B cell (primary cell): ENCODE measurements at regions of chr6 and their contacts with region 1.

Region 1: DNA sequence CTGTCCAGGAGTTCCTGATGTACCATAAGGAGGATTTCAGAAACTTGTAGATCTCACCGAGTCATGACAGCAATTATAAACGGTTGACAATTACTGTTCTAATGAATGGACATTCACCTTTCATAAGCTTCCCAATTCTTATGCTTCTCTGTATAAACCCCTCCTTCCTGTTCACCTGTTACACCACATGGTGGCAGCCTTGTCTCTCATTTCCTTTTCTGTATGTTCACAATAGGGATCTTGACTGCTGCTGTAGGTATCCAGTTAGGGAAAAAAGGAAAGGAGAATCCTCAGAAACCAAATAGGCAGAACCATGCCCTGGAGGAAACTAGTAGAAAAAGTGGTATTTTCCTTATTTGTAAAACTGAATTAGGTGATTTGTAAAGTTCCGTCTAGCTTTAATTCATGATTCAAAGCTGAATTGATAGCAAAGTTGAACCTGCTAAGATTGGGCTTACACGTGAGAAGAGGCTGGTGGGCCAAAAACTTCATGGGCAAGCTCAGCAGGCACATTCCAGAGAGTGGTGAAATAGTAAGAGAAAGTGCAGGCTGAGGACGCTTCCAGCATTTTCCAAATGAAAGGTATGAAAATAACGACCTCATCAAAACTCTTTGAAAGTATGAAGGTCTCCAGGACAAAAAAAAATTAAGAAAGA is 29.0 kb upstream of the TBPL1 start:
- DNase-seq: peak; percentile 77
- ATAC-seq: peak; percentile 88
- H3K4me3 ChIP-seq: no peak overlapping the region
- H3K4me3 Mint-ChIP-seq: no peak overlapping the region
- H3K27ac ChIP-seq: no peak overlapping the region
- H3K27ac Mint-ChIP-seq: no peak overlapping the region
- H3K4me1 ChIP-seq: no peaks in the 10 kb centered on the region
- H3K4me1 Mint-ChIP-seq: no peaks in the 10 kb centered on the region
- H3K27me3 ChIP-seq: peaks cover 0 to 18% (median 4%) of the 10 kb centered on the region in 4 experiments
- H3K27me3 Mint-ChIP-seq: peaks cover 33% of the 10 kb centered on the region
- CTCF ChIP-seq: peak; percentile 90

Region 2: GRCh38 chr6:133937909-133938308 is 13.8 kb after region 1 on chr6:
- CTCF ChIA-PET with region 1: interaction called, 32 read pairs
- POLR2A ChIA-PET with region 1: no interaction called
- intact Hi-C with region 1: no loop called
- DNase-seq: no peak
- ATAC-seq: no peak
- H3K4me3 ChIP-seq: no peak overlapping the region
- H3K4me3 Mint-ChIP-seq: no peak overlapping the region
- H3K27ac ChIP-seq: no peak overlapping the region
- H3K27ac Mint-ChIP-seq: no peak overlapping the region
- H3K4me1 ChIP-seq: no peaks in the 10 kb centered on the region
- H3K4me1 Mint-ChIP-seq: no peaks in the 10 kb centered on the region
- H3K27me3 ChIP-seq: peaks cover 0 to 11% (median 2%) of the 10 kb centered on the region in 4 experiments
- H3K27me3 Mint-ChIP-seq: peaks cover 30% of the 10 kb centered on the region
- CTCF ChIP-seq: no peak

Region 3: GRCh38 chr6:133952815-133953633 is 29.0 kb after region 1 on chr6 and contains the start of gene TBPL1:
- CTCF ChIA-PET with region 1: interaction called, 13 read pairs
- POLR2A ChIA-PET with region 1: no interaction called
- intact Hi-C with region 1: no loop called
- DNase-seq: peak; percentile 97
- ATAC-seq: peak; percentile 78
- H3K4me3 ChIP-seq: peak within 1 kb of the TSS; percentile 78 to 98 (median 94)
- H3K4me3 Mint-ChIP-seq: peak within 1 kb of the TSS; percentile 98
- H3K27ac ChIP-seq: peak within 1 kb of the TSS; percentile 83 to 89
- H3K27ac Mint-ChIP-seq: peak within 1 kb of the TSS; percentile 97
- H3K4me1 ChIP-seq: peaks cover 20 to 27% of the 10 kb centered on the region in 2 donors
- H3K4me1 Mint-ChIP-seq: peaks cover 48% of the 10 kb centered on the region
- H3K27me3 ChIP-seq: no peaks in the 10 kb centered on the region
- H3K27me3 Mint-ChIP-seq: no peaks in the 10 kb centered on the region
- CTCF ChIP-seq: no peak
- total RNA-seq, gene TBPL1: 26.9 and 29.6 TPM in 2 replicates

Region 4: GRCh38 chr6:133973109-133973971 is 49.3 kb after region 1 on chr6:
- CTCF ChIA-PET with region 1: interaction called, 31 read pairs
- POLR2A ChIA-PET with region 1: no interaction called
- intact Hi-C with region 1: loop called (anchors 1 kb)
- DNase-seq: peak; percentile 63
- ATAC-seq: peak; percentile 43
- H3K4me3 ChIP-seq: no peak overlapping the region
- H3K4me3 Mint-ChIP-seq: no peak overlapping the region
- H3K27ac ChIP-seq: no peak overlapping the region
- H3K27ac Mint-ChIP-seq: no peak overlapping the region
- H3K4me1 ChIP-seq: no peaks in the 10 kb centered on the region
- H3K4me1 Mint-ChIP-seq: peaks cover 27% of the 10 kb centered on the region
- H3K27me3 ChIP-seq: no peaks in the 10 kb centered on the region
- H3K27me3 Mint-ChIP-seq: no peaks in the 10 kb centered on the region
- CTCF ChIP-seq: peak; percentile 86

Region 5: DNA sequence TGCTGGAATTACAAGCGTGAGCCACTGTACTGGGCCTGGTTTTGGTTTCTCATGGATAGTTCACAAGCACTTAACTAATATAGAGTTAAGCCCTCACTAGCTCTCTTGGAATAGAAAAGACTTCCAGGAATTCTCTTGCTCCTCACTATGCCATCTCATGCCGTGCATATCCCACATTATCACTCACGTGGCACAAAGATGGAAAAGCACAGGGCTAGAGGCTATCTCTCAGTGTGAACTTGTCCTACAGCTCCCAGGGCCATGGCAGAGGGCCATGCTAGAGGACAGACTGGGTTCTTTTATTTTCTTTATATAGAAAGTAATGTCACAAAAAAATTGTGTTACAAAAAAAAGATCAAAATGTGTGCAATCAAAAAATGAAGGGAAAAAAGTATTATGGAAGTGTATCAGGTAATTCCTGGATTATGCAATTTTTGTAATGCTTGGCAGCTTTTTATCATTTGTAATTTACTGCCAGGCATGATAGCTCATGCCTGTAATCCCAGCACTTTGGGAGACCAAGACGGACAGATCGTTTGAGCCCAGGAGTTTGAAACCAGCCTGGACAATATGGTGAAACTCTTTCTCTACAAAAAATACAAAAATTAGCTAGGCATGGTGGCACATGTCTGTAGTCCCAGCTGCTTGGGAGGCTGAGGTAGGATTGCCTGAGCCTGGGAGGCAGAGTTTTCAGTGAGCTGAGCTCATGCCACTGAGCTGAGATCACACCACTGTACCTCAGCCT is 134.7 kb after region 1 on chr6:
- CTCF ChIA-PET with region 1: interaction called, 183 read pairs
- POLR2A ChIA-PET with region 1: no interaction called
- intact Hi-C with region 1: loop called (anchors 1 kb)
- DNase-seq: no peak
- ATAC-seq: no peak
- H3K4me3 ChIP-seq: no peak overlapping the region
- H3K4me3 Mint-ChIP-seq: no peak overlapping the region
- H3K27ac ChIP-seq: no peak overlapping the region
- H3K27ac Mint-ChIP-seq: no peak overlapping the region
- H3K4me1 ChIP-seq: no peaks in the 10 kb centered on the region
- H3K4me1 Mint-ChIP-seq: no peaks in the 10 kb centered on the region
- H3K27me3 ChIP-seq: no peaks in the 10 kb centered on the region
- H3K27me3 Mint-ChIP-seq: peaks cover 5% of the 10 kb centered on the region
- CTCF ChIP-seq: no peak

Region 6: DNA sequence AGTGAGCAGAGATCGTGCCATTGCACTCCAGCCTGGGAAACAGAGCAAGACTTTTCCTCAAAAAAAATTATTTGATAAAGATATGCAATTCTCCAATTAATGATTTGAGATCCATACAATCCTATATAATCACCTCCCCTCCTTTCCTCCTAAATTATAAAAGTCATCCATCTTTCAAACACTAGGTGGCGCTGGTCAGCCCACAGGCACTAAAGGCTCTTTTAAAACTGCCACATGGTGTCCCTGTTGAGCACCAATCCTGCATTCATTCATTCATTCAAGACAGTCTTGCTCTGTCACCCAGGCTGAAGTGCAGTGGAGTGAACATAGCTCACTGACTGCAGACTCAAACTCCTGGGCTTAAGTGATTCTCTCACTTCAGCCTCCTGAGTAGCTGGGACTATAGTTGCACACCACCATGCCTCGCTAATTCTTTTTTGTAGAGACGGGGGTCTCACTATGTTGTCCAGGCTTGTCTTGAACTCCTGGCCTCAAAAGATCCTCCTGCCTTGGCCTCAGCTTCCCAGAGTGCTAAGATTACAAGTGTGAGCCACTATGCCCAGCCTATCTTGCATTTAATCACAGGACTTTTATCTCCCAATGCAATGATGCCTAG is 187.1 kb after region 1 on chr6:
- CTCF ChIA-PET with region 1: interaction called, 10 read pairs
- POLR2A ChIA-PET with region 1: no interaction called
- intact Hi-C with region 1: no loop called
- DNase-seq: peak; percentile 69
- ATAC-seq: peak; percentile 53
- H3K4me3 ChIP-seq: no peak overlapping the region
- H3K4me3 Mint-ChIP-seq: no peak overlapping the region
- H3K27ac ChIP-seq: no peak overlapping the region
- H3K27ac Mint-ChIP-seq: no peak overlapping the region
- H3K4me1 ChIP-seq: no peaks in the 10 kb centered on the region
- H3K4me1 Mint-ChIP-seq: no peaks in the 10 kb centered on the region
- H3K27me3 ChIP-seq: peaks cover 0 to 11% (median 0%) of the 10 kb centered on the region in 4 experiments
- H3K27me3 Mint-ChIP-seq: peaks cover 19% of the 10 kb centered on the region
- CTCF ChIP-seq: peak; percentile 88

Region 7: GRCh38 chr6:134182528-134182927 is 258.5 kb after region 1 on chr6:
- CTCF ChIA-PET with region 1: no interaction called
- POLR2A ChIA-PET with region 1: no interaction called
- intact Hi-C with region 1: no loop called
- DNase-seq: no peak
- ATAC-seq: no peak
- H3K4me3 ChIP-seq: no peak overlapping the region
- H3K4me3 Mint-ChIP-seq: no peak overlapping the region
- H3K27ac ChIP-seq: no peak overlapping the region
- H3K27ac Mint-ChIP-seq: no peak overlapping the region
- H3K4me1 ChIP-seq: peaks cover 13 to 19% of the 10 kb centered on the region in 2 donors
- H3K4me1 Mint-ChIP-seq: peaks cover 14% of the 10 kb centered on the region
- H3K27me3 ChIP-seq: no peaks in the 10 kb centered on the region
- H3K27me3 Mint-ChIP-seq: peaks cover 1% of the 10 kb centered on the region
- CTCF ChIP-seq: no peak